OCI-LY7 (cell line): ENCODE measurements at regions of chr18 and their contacts with region 1.

Region 1: GRCh38 chr18:62714671-62715435 is 488 bp upstream of the PHLPP1 start:
- DNase-seq: peak; percentile 91
- H3K4me3 ChIP-seq: peak overlapping the region; percentile 72
- H3K27ac ChIP-seq: peak overlapping the region; percentile 37
- H3K4me1 ChIP-seq: peaks cover 15% of the 10 kb centered on the region
- CTCF ChIP-seq: peak; percentile 66

Region 2: GRCh38 chr18:62522504-62523254 is 192.2 kb before region 1 on chr18 and contains the start of gene ZCCHC2:
- CTCF ChIA-PET with region 1: no interaction called
- POLR2A ChIA-PET with region 1: no interaction called
- intact Hi-C with region 1: loop called (anchors 5 kb)
- DNase-seq: peak; percentile 90
- H3K4me3 ChIP-seq: peak within 1 kb of the TSS; percentile 87
- H3K27ac ChIP-seq: peak within 1 kb of the TSS; percentile 78
- H3K4me1 ChIP-seq: peaks cover 9% of the 10 kb centered on the region
- CTCF ChIP-seq: no peak
- total RNA-seq, gene ZCCHC2: 13.5 and 17.5 TPM in 2 replicates

Region 3: GRCh38 chr18:62651276-62652056 is 63.4 kb before region 1 on chr18:
- CTCF ChIA-PET with region 1: no interaction called
- POLR2A ChIA-PET with region 1: no interaction called
- intact Hi-C with region 1: loop called (anchors 2 kb)
- DNase-seq: peak; percentile 49
- H3K4me3 ChIP-seq: peak overlapping the region; percentile 63
- H3K27ac ChIP-seq: peak overlapping the region; percentile 93
- H3K4me1 ChIP-seq: peaks cover 49% of the 10 kb centered on the region
- CTCF ChIP-seq: no peak

Region 4: DNA sequence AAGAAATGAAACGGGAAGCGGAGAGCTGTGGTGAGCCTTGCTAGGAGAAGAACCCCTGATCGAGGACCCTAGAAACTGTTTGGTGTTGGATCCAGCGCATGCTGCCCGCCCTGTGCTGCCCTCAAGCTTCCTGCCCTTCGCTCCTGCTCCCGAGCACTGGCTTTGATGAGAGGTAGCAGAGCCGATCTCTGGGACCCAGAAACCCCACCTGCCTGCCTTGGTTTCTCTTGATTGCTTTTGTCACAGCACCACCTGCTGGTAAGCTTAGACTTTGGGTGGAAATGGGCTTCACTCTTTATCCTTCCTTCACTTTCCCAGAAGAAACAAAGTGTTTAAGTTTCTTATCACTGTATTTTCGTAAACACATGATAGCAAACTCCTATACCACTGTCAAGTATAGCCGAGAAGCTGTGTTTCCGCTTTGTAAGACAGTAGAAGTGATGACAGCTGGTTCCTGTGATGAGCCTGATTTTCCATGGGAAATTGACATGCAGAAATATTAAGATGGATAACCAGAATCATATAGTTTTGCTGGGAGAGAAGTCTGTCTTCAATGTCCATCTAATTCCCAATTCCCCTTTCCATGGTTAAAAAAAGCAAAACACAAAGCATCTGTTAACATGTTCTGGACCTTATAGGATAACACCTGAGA is 267.9 kb after region 1 on chr18:
- CTCF ChIA-PET with region 1: no interaction called
- POLR2A ChIA-PET with region 1: no interaction called
- intact Hi-C with region 1: loop called (anchors 1 kb)
- DNase-seq: peak; percentile 49
- H3K4me3 ChIP-seq: no peak overlapping the region
- H3K27ac ChIP-seq: no peak overlapping the region
- H3K4me1 ChIP-seq: no peaks in the 10 kb centered on the region
- CTCF ChIP-seq: peak; percentile 78